ENCODE measurements at regions of chr1 and their contacts with region 1.

Region 1: GRCh38 chr1:23916209-23917131 is 3.3 kb upstream of the CNR2 start:
- DNase-seq: peak; percentile 32
- H3K4me3 Mint-ChIP-seq: no peak overlapping the region
- H3K27ac Mint-ChIP-seq: no peak overlapping the region
- H3K4me1 Mint-ChIP-seq: peaks cover 21% of the 10 kb centered on the region
- H3K27me3 Mint-ChIP-seq: no peaks in the 10 kb centered on the region

Region 2: DNA sequence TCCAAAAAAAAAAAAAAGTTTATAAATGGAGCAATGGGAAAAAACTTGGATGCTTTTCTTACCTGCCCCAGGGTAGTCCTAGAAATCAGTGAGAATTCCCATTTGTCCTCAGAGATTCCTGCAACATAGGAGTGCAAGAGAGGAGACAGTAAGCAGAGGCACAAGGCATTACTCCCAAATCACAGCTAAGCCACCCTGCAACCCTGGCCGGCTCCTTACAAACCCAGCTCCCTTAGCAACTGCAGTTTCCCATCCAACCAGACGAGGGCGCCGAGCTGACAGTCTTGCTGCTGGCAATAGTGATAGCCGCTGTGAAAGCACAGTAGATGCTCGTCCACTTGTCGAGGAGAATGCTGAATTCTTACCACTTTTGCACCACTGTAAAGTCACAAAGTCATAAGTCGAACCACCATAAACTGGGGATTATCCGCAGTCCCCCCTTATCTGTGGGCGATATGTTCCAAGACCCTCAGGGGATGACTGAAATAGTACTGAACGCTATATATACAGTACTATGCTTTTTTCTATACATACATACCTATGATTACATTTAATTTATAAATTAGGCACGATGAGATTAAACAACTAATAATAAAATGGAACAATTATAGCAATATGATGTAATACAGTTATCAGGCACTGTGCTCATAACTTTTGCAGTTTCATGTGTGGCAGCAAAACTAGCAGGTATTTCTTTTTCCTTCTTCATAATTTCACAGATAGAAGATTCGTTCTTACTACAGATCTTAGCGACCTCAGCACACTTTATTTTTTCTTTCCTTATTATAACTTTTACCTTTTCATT is 144.2 kb before region 1 on chr1:
- intact Hi-C with region 1: loop called (anchors 1 kb)
- DNase-seq: peak; percentile 79
- H3K4me3 Mint-ChIP-seq: no peak overlapping the region
- H3K27ac Mint-ChIP-seq: no peak overlapping the region
- H3K4me1 Mint-ChIP-seq: peaks cover 23% of the 10 kb centered on the region
- H3K27me3 Mint-ChIP-seq: no peaks in the 10 kb centered on the region

Region 3: DNA sequence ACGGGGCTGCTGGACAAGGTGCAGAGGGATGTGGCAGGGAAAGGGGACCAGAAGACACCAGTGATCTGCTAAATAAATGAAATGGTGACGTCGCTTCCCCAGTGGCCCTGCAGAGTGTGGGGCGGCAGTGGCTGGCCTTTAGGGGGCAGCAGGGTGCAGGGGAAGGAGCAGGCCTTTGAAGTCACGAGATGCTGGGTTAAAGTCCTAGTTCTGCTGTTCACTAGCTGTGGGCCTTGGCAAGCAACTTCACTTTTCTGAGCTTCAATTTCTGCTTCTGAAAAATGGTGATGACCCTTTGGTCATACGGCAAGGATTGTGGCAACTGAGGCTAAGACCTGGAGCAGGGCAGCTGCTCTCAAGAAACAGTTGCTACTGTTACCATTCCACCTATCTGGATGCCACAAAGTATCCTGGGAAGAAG is 106.7 kb before region 1 on chr1:
- intact Hi-C with region 1: loop called (anchors 1 kb)
- DNase-seq: peak; percentile 75
- H3K4me3 Mint-ChIP-seq: no peak overlapping the region
- H3K27ac Mint-ChIP-seq: no peak overlapping the region
- H3K4me1 Mint-ChIP-seq: peaks cover 3% of the 10 kb centered on the region
- H3K27me3 Mint-ChIP-seq: no peaks in the 10 kb centered on the region

Region 4: DNA sequence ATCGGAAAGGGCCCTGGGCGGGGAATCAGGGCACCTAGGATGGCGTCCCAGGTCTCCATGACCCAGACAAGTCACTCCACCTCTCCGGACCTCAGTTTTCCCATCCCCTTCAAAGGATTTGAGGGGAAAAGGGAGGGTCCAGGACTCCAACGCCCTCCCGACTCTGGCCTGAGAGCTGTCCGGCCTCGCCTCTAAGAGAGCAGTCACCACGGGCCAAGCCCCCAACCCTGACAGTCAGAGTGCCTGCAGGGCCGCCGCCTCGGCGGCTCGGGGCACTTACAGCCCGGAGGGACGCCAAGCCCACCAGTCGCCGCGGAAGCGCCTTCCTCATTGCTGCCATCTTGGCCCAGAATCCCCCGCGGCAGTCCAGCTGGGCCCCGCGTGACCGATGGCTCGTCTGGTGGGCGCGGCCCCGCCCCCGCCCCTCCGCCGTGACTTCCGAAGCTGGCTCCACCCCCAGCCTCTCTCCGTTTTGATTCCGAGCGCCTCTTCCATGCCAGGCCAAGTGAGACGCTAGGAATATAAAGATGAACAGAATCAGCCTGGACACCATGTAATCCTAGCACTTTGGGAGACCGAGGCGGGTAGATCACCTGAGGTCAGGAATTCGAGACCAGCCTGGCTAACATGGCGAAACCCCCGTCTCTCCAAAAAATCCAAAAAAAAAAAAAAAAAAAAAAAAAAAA is 91.3 kb before region 1 on chr1 and contains the start of gene HMGCL:
- intact Hi-C with region 1: loop called (anchors 5 kb)
- DNase-seq: peak; percentile 82
- H3K4me3 Mint-ChIP-seq: peak within 1 kb of the TSS; percentile 93
- H3K27ac Mint-ChIP-seq: peak within 1 kb of the TSS; percentile 91
- H3K4me1 Mint-ChIP-seq: peaks cover 16% of the 10 kb centered on the region
- H3K27me3 Mint-ChIP-seq: no peaks in the 10 kb centered on the region
- total RNA-seq, gene HMGCL: 22.8 and 25.9 TPM in 2 replicates

Region 5: DNA sequence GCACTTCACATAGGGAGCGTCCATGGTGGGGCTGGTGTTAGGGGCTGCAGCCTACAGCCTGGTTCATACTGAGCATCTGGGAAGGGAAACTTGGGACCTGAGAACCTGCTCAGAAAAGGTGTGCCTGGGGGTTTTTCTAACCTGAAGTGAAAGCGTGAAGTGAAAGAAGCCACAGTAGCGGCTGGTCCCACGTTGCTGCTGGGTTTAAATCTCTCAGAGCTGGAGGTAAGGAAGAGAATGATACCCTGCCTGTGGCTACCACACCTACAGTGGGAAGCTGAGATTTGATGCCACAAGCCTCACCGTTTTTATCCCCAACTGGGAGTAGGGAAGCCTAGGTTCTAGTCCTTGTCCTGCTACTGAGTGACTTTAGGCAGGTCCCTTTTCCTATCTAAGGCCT is 27.4 kb before region 1 on chr1:
- intact Hi-C with region 1: no loop called
- DNase-seq: no peak
- H3K4me3 Mint-ChIP-seq: no peak overlapping the region
- H3K27ac Mint-ChIP-seq: no peak overlapping the region
- H3K4me1 Mint-ChIP-seq: no peaks in the 10 kb centered on the region
- H3K27me3 Mint-ChIP-seq: peaks cover 5% of the 10 kb centered on the region

Region 6: DNA sequence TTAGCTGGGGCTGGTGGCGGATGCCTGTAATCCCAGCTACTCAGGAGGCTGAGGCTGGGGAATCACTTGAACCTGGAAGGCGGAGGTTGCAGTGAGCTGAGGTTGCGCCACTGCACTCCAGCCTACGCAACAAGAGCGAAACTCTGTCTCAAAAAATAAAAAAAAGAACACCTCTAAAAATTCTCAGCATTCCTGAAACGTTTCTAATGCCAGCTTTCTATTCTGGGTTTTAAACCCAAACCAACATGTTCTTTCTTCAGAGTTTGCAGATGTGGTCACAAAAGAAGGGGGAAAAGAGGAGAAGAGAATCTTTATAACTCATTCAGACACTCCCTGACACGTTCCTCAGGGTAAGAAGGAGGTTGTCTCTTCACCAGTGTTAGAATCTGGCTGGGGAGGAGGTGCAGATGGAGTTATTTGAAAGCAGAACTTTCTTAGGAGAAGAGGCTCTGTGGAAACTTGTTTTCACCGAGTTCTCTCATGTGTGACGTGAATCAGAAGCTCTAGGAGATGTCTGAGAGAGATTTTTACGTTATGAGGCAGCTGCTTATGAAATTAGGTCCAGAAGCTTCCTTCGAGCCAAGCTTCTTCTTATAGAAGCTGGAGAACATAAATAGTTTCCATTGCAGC is 14.5 kb after region 1 on chr1:
- intact Hi-C with region 1: no loop called
- DNase-seq: no peak
- H3K4me3 Mint-ChIP-seq: no peak overlapping the region
- H3K27ac Mint-ChIP-seq: no peak overlapping the region
- H3K4me1 Mint-ChIP-seq: no peaks in the 10 kb centered on the region
- H3K27me3 Mint-ChIP-seq: peaks cover 15% of the 10 kb centered on the region

Measured in activated T-helper 2 cell treated with anti-CD3 and anti-CD28 coated beads, Interferon-gamma antibody, Interleukin-2, Interleukin-4, amounts not matched to agents 10 μg/mL and 5 μg/mL and 100 μg/mL, durations not matched to agents 14 hours and 24 hours and 36 hours (primary cell).